A549 (cell line): ENCODE measurements at regions of chr3 and their contacts with region 1.

Region 1: DNA sequence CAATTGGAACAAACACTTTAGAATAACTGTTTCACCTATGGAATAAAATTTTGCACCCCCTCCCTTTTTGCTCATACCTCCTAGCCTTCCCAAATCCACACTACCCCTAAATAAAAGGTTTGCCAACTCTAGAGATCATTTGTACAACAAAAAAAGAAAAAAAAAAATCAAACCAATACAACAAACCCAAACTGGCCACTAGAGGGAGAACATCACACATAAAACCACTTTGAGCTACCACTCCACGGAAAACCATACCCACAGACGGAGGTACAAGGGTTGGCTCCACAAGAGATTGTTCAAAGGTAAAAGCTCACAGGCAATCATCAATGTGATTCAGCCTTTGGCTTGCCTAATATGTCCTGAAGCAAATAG is 47.6 kb downstream of the SETMAR start:
- DNase-seq: peak; percentile 70 to 76
- ATAC-seq: peak; percentile 84 to 89
- H3K4me3 ChIP-seq: no peak overlapping the region
- H3K27ac ChIP-seq: no peak overlapping the region
- H3K4me1 ChIP-seq: 0 out of 3 replicates have a peak, but pooled peaks cover 3% of the 10 kb centered on the region
- CTCF ChIP-seq: peak; percentile 89
- EP300 ChIP-seq: no peak
- POLR2A ChIP-seq: no peak
- RAD21 ChIP-seq: peak; percentile 85 to 88

Region 2: DNA sequence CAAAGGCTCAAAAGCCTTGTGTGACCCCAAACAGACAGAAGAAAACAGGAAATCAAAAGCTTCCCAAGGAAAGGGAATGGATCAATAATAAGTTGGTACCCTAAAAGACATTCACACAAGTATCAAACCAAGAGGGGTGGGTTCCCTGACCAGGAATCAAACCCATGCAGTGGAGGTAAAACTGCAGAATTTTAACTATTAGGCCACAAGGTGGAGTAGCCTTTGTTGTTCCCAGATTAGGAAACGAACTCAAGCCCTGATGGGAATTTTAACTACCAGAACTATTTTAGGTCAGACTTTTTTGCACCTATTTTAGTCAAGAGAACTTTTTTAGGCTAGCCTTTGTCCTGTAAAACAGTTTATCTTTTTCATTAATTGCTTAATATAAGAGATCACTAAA is 16.2 kb before region 1 on chr3:
- CTCF ChIA-PET with region 1: interaction called, 12 read pairs
- POLR2A ChIA-PET with region 1: no interaction called
- DNase-seq: no peak
- ATAC-seq: no peak
- H3K4me3 ChIP-seq: no peak overlapping the region
- H3K27ac ChIP-seq: no peak overlapping the region
- H3K4me1 ChIP-seq: no peaks in the 10 kb centered on the region
- CTCF ChIP-seq: 0 out of 3 replicates have a peak, but pooled peaks have one; percentile 10
- EP300 ChIP-seq: no peak
- POLR2A ChIP-seq: no peak
- RAD21 ChIP-seq: no peak

Region 3: GRCh38 chr3:4340411-4341335 is 10.1 kb before region 1 on chr3:
- CTCF ChIA-PET with region 1: interaction called, 23 read pairs
- POLR2A ChIA-PET with region 1: no interaction called
- DNase-seq: no peak
- ATAC-seq: no peak
- H3K4me3 ChIP-seq: no peak overlapping the region
- H3K27ac ChIP-seq: 0 out of 6 replicates have a peak overlapping the region, but pooled peaks of 1 of the 2 experiments have one; percentile 17
- H3K4me1 ChIP-seq: no peaks in the 10 kb centered on the region
- CTCF ChIP-seq: no peak
- EP300 ChIP-seq: no peak
- POLR2A ChIP-seq: no peak
- RAD21 ChIP-seq: no peak

Region 4: DNA sequence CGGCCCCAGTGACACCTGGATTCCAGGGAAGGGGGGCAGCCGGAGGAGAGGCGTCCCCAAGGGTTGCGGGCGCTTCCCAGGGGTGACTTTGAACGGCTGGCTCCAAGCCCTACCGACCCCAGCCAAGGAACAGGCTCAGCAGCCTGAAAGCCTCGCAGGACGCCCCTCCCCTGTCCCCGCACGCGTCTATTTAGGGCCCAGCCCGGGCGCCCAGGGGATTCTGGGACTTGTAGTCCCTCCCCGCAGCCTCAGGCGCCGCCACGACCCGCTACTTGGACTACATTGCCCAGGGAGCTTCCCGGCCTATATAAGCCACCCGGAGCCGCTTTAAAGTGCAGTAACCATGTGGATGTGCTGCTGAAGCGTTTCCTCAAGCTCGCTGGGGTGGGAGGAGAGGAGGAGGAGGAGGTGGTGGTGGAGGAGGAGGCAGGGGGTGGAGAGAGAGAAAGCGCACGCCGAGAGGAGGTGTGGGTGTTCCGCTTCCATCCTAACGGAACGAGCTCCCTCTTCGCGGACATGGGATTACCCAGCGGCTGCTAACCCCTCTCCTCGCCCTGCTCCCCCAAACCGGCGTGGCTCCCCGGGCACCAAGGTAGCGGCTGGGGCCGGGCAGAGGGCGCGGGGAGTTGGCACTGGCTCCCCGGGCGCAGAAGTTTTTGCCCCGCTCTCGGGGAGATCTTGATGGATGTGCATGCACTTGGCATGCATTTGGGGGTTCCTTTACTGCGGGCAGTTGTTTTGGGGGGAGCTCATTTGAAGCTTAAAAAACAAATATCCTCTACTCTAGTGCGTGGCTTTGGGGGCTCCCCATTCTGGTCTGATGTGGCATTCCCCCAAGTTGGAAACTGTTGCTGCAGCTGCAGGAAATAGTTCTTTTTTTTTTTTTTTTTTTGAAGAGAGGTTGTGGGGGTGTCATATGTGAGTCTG is 142.5 kb after region 1 on chr3 and contains the start of gene ITPR1:
- CTCF ChIA-PET with region 1: interaction called, 14 read pairs
- POLR2A ChIA-PET with region 1: interaction called, 7 read pairs
- DNase-seq: peak; percentile 94 to 98
- ATAC-seq: peak; percentile 94 to 96
- H3K4me3 ChIP-seq: peak within 1 kb of the TSS; percentile 71
- H3K27ac ChIP-seq: peak within 1 kb of the TSS; percentile 73 to 90
- H3K4me1 ChIP-seq: peaks cover 9% of the 10 kb centered on the region; the same call in 1 of the 3 replicates
- CTCF ChIP-seq: no peak
- EP300 ChIP-seq: no peak
- POLR2A ChIP-seq: peak; percentile 98
- RAD21 ChIP-seq: peak in 1 of 2 experiments; percentile 5; a peak in 1 of 5 replicates
- polyA plus RNA-seq, gene ITPR1: 9.6 and 10.7 TPM in 2 replicates

Region 5: GRCh38 chr3:4644951-4645350 is 294.2 kb after region 1 on chr3:
- CTCF ChIA-PET with region 1: interaction called, 11 read pairs
- POLR2A ChIA-PET with region 1: no interaction called
- DNase-seq: no peak
- ATAC-seq: no peak
- H3K4me3 ChIP-seq: no peak overlapping the region
- H3K27ac ChIP-seq: no peak overlapping the region
- H3K4me1 ChIP-seq: no peaks in the 10 kb centered on the region
- CTCF ChIP-seq: no peak
- EP300 ChIP-seq: no peak
- POLR2A ChIP-seq: no peak
- RAD21 ChIP-seq: no peak

Region 6: DNA sequence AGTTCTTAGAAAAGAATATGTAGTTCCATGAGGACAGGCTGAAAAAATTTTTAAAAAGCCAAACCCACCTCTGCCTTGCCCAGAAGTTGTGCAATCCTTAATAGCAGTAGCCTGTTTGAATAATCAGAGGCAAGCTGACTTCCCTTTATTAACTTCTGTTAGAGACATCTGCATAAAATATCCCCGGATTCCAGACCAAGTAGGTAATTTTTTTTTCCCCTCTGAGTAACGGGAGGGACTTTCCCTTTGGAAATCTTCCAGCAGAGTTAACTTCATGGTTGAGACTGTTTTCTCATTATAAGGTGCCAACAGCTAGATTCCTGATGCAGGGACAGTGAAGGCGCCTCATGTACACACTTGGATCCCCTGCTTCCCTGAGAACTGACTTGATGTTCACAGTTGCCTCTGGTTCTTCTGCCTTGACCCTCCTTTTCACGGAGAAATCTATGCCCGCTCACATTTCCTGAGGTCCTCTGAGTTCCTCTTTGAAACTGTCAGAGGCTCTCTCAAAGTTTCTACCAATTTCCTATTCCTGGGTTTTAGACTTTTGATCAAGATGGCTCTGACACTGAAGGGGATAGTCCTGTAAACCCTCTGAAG is 400.8 kb after region 1 on chr3:
- CTCF ChIA-PET with region 1: no interaction called
- POLR2A ChIA-PET with region 1: no interaction called
- DNase-seq: peak; percentile 56 to 65
- ATAC-seq: peak; percentile 17 to 41; a peak in 5 of 6 replicates
- H3K4me3 ChIP-seq: no peak overlapping the region
- H3K27ac ChIP-seq: peak overlapping the region; percentile 79 to 86
- H3K4me1 ChIP-seq: peaks cover 36% of the 10 kb centered on the region
- CTCF ChIP-seq: no peak
- EP300 ChIP-seq: no peak
- POLR2A ChIP-seq: no peak
- RAD21 ChIP-seq: no peak